Ascending aorta (tissue), 2 donors: ENCODE measurements at regions of chrX and their contacts with region 1.

Region 1: DNA sequence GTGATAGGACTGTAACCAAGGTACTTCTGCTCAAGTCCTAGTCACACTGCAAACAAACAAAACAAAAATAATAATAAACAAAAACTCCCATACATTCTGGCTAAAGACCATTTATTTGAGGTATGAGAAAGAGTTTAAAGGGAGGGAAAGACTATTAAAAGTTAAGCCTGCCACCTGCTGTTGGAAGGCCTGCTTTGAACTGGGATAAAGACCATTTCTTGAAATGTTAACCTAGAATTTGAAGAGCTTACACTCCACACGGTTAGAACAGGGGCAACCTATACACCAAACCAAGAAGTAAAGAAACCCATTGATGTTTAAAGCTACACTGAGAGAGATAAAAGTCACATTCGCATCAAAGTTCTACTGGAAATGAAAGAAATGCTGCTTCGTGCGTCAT is 548.7 kb upstream of the DIPK2B start:
- DNase-seq: no peak
- H3K4me3 ChIP-seq: no peak overlapping the region
- H3K27ac ChIP-seq: no peak overlapping the region
- H3K4me1 ChIP-seq: peaks cover 0 to 3% of the 10 kb centered on the region in 2 donors
- H3K27me3 ChIP-seq: no peaks in the 10 kb centered on the region
- CTCF ChIP-seq: peak in 2 of 3 experiments; percentile 16 to 41

Region 2: DNA sequence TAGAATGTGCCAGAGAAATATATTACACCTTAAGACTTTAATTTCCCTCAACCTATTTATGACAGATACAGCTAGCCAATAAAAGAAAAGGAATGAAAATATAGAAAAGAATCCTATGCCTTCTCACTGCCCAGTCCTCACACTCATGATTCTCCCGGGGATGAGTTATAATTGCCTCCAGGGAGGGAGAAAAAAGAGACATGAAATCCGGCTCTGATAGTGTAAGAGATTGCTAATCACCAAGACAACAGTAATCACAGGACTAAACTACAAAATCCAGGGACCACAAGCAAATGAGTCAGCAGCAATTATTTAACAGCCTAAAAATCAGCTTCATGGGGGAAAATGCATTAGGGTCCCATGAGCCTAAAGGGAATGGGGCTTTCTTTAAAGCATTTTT is 1001.4 kb before region 1 on chrX:
- intact Hi-C with region 1: no loop called
- DNase-seq: no peak
- H3K4me3 ChIP-seq: no peak overlapping the region
- H3K27ac ChIP-seq: no peak overlapping the region
- H3K4me1 ChIP-seq: no peaks in the 10 kb centered on the region
- H3K27me3 ChIP-seq: no peaks in the 10 kb centered on the region
- CTCF ChIP-seq: no peak

Region 3: DNA sequence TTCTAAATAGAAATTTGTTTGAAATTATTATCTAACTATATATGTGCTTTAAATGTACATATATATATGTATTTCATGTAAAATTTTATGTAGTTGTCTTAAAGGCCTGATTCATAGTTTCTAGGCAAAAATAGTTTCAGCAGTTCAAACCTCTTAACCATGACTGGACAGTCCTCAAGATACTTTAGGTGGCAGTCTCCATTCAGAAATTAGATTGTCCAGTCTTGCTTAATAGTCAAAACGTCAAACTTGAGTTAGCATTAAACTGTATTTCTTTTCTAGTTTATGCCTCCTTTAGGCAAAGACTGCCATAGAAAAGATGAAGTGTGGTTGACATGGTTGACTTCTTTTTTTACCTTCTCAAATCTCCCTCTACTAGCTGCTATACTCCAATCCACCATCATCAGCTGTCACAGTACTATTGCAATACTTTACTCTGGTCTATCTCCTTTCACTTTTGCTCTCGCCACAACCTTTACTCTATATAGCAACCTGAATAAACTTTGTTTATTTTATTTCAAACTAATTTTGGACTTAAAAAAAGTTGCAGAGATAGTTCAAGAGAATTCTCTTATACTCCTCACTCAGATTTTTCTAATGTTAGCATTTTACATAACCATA is 153.1 kb before region 1 on chrX:
- intact Hi-C with region 1: loop called (anchors 5 kb)
- DNase-seq: no peak
- H3K4me3 ChIP-seq: no peak overlapping the region
- H3K27ac ChIP-seq: no peak overlapping the region
- H3K4me1 ChIP-seq: no peaks in the 10 kb centered on the region
- H3K27me3 ChIP-seq: no peaks in the 10 kb centered on the region
- CTCF ChIP-seq: peak in 1 of 3 experiments; percentile 33

Region 4: GRCh38 chrX:45935408-45935807 is 186.0 kb after region 1 on chrX:
- intact Hi-C with region 1: no loop called
- DNase-seq: no peak
- H3K4me3 ChIP-seq: no peak overlapping the region
- H3K27ac ChIP-seq: no peak overlapping the region
- H3K4me1 ChIP-seq: no peaks in the 10 kb centered on the region
- H3K27me3 ChIP-seq: no peaks in the 10 kb centered on the region
- CTCF ChIP-seq: no peak

Region 5: DNA sequence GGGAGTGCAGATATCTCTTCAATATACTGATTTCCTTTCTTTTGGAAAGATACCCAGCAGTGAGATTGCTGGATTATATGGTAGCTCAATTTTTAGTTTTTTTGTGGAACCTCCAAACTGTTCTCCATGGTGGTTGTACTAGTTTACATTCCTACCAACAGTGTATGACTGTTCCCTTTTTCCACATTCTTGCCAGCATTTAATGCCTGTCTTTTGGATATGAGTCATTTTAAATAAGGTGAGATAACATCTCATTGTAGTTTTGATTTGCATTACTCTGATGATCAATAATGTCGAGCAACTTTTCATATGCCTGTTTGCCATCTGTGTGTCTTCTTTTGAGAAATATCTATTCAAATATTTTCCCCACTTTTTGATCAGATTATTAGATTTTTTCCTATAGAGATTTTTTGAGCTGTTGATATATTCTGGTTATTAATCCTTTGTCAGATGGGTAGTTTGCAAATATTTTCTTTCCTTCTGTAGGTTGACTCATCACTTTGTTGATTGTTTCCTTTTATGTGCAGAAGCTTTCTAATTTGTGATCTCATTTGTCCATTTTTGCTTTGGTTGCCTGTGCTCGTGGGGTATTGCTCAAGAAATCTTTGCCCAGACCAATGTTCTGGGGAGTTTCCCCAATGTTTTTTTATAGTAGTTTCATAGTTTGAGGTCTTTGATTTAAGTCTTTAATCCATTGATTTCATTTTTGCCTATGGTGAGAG is 243.2 kb after region 1 on chrX:
- intact Hi-C with region 1: no loop called
- DNase-seq: no peak
- H3K4me3 ChIP-seq: no peak overlapping the region
- H3K27ac ChIP-seq: no peak overlapping the region
- H3K4me1 ChIP-seq: no peaks in the 10 kb centered on the region
- H3K27me3 ChIP-seq: no peaks in the 10 kb centered on the region
- CTCF ChIP-seq: no peak